Dorsolateral prefrontal cortex (tissue), 120 donors: ENCODE measurements at regions of chr11 and their contacts with region 1.

Region 1: DNA sequence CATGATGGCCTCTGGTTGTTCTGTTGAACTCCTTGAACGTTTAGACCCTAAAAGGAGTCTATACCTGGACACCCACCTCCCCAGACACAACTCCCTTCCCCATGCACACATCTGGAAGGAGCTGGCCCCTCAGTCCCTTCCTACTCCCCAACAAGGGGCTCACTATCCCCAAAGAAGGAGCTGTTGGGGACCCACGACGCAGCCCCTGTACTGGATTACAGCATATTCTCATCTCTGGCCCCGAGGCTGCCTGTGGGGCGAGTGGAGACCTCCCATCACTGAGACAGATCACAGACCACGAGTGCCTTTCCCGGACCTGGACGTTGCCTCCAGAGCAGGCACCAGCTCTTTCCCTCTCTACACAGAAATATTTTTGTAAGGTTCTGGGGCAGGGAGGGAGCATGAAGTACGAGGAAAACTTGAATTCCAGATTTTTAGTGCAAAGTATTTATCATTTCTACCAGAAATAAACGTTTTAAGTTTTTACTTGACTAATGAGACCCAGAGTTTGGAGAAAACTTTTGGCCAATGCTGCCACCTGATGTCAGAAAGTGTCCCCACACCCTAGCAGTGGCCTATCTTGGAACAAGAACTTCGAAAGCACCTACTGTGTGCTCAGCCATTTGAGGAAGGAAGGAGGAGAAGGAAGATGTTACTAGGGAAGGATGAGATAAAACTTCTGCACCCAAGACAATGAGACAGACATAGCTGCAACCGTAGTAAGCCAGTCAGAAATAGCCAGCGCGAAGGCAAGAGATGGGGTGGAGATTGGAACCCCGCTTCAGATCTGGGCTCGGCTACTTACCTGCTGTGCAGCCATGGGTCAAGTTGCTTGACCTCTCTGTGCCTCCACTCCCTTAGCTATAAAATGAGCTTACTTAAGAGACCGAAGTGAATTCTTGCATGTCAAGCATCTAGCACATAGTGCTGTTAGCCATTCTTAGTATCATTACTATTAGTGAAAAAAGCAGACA is 10.2 kb upstream of the POU2F3 start:
- DNase-seq: peak in 2 of 10 donors; percentile 58 to 60
- H3K4me3 ChIP-seq: no peak overlapping the region
- H3K27ac ChIP-seq: peak overlapping the region in 4 of 59 donors; percentile 11 to 24 (median 23)
- H3K27me3 ChIP-seq: peaks cover 0 to 6% (median 0%) of the 10 kb centered on the region in 45 donors
- CTCF ChIP-seq: peak; percentile 52 to 95 (median 82)

Region 2: DNA sequence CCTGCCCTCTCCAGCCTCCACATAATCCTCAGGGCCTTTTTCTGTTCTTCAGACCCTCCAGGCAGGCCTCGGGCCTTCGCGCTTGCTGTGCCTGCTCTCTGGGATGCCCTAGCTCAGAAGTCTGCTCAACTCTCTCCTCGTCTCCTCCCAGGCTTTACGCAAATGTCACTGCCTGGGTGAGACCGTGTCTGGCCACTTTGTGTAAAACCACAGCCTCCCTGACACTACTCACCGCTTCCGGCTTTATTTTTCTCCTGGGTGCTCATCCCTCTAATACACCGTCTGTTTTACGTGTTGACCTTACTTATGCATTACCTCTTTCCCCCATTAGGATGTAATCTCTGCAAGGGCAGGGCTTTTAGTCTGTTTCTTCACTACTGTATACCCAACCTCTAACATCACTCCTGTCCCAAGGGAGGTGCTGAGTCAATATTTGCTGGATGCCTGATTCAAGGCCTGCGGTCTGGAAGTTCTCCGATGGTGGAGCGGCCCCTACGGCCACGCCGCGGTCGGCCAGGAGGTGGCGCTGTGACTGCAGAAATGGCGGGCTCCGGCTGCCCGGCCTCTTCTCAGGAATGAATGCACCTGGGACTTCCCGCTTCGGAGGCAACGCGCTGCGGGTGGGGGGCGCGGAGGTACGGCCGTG is 748.6 kb before region 1 on chr11:
- intact Hi-C with region 1: loop called in 1 of 2 experiments (anchors 5 kb)
- DNase-seq: peak; percentile 67 to 93 (median 86)
- H3K4me3 ChIP-seq: peak overlapping the region in 43 of 59 donors; percentile 3 to 53 (median 33)
- H3K27ac ChIP-seq: peak overlapping the region in 3 of 59 donors; percentile 15 to 44 (median 22)
- H3K27me3 ChIP-seq: no peaks in the 10 kb centered on the region
- CTCF ChIP-seq: peak; percentile 87 to 100 (median 99)

Region 3: GRCh38 chr11:120172054-120172911 is 57.5 kb before region 1 on chr11:
- intact Hi-C with region 1: loop called (anchors 1 kb)
- DNase-seq: peak in 9 of 10 donors; percentile 55 to 80 (median 72)
- H3K4me3 ChIP-seq: peak overlapping the region in 3 of 59 donors; percentile 11 to 26 (median 11)
- H3K27ac ChIP-seq: no peak overlapping the region
- H3K27me3 ChIP-seq: peaks cover 0 to 5% (median 0%) of the 10 kb centered on the region in 45 donors
- CTCF ChIP-seq: peak; percentile 69 to 98 (median 92)

Region 4: DNA sequence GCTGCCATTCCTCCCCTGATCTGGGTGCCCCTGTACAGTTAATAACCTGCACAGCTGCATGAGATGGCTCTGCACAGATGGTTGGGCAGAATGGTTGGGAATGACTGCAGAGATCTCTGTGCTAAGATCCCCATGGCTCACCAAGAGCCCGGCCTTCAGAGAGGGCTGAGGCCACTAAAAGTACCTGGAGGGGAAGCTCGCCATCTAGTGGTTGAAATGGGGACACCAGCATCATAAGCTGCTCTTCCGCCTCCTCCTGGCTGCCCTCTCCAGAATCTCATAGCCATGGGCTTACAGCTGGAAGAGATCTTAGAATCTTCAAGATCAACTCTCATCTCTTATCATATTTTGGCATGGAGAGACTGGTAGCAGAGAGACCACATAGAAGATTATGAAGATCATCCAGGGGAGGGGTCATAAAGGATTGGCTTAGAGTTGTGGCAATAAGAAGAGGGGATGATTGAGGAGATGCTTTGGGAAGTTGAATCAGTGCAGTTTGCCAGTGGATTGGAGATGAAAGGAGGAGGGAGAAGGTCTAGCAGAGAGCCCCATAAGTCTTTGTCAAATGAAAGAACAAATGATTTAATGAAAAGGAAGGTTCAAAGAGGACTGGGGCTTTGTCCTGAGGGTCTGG is 73.4 kb after region 1 on chr11:
- intact Hi-C with region 1: loop called in 1 of 2 experiments (anchors 2 kb)
- DNase-seq: peak in 7 of 10 donors; percentile 37 to 65 (median 56)
- H3K4me3 ChIP-seq: no peak overlapping the region
- H3K27ac ChIP-seq: no peak overlapping the region
- H3K27me3 ChIP-seq: peaks cover 0 to 7% (median 0%) of the 10 kb centered on the region in 45 donors
- CTCF ChIP-seq: peak; percentile 35 to 91 (median 83)